Activated CD8-positive, alpha-beta memory T cell treated with anti-CD3 and anti-CD28 coated beads, Interleukin-2, amount 10 ng/mL, durations not matched to agents 7 days and 5 days (primary cell): ENCODE measurements at regions of chr4 and their contacts with region 1.

Region 1: DNA sequence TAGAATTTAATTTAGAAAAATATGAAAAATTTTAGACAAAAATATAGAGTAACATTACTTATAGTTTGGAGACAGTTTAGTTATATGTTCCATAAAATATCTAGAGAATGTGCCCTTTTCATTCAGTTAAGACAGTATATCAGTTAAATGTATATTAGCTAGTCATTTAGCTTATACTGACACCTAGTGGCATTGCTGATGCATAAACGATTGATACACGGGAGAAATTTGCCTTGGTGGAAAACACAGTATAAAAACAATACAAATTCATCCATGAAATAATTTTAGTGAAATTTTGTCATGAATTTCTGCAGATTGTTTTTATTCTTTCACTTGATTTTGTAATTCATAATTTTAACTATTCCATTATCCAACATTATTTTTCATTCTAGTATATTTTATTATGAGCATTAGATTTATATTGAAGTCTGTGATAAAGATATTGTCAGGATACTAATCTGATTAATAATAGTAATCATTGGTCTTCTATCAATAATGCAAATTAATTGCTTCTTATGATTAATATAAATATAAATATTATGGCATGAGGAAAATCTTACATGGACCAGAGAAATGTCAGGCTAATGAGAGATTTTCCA is 219.0 kb downstream of the TLL1 start:
- DNase-seq: no peak
- ATAC-seq: no peak
- H3K4me3 Mint-ChIP-seq: no peak overlapping the region
- H3K27ac Mint-ChIP-seq: no peak overlapping the region
- H3K4me1 Mint-ChIP-seq: no peaks in the 10 kb centered on the region
- H3K27me3 Mint-ChIP-seq: no peaks in the 10 kb centered on the region

Region 2: DNA sequence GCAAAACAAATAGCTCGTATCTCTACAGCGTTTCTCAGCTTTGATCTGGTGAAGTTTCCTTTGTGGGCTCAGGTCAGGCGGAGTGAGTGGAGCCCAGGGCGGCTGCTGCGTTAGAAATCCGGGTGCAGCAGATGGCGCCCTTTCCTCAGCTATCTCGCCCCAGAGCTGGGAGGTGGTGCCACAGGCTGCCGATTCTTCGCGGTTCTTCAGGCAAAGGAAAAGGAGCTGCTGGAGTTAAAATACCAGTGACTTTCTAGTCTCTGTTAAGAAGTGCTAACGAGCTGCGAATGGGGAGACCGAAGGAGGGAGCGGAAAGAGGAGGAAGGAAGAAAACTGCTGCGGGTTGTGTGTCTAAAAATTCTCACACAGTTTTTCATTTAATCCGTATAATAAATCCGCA is 598.7 kb before region 1 on chr4:
- CTCF ChIA-PET with region 1: interaction called, 11 read pairs
- DNase-seq: peak; percentile 71
- ATAC-seq: peak; percentile 86
- H3K4me3 Mint-ChIP-seq: no peak overlapping the region
- H3K27ac Mint-ChIP-seq: no peak overlapping the region
- H3K4me1 Mint-ChIP-seq: peaks cover 4% of the 10 kb centered on the region
- H3K27me3 Mint-ChIP-seq: peaks cover 28% of the 10 kb centered on the region